ENCODE measurements at regions of chrX and their contacts with region 1.

Region 1: GRCh38 chrX:131841496-131842410 is 181.3 kb upstream of the STK26 start:
- DNase-seq: no peak
- H3K4me3 Mint-ChIP-seq: no peak overlapping the region
- H3K27ac Mint-ChIP-seq: no peak overlapping the region
- H3K4me1 Mint-ChIP-seq: no peaks in the 10 kb centered on the region
- H3K27me3 Mint-ChIP-seq: no peaks in the 10 kb centered on the region

Region 2: GRCh38 chrX:131617182-131617581 is 224.6 kb before region 1 on chrX:
- intact Hi-C with region 1: no loop called
- DNase-seq: no peak
- H3K4me3 Mint-ChIP-seq: no peak overlapping the region
- H3K27ac Mint-ChIP-seq: no peak overlapping the region
- H3K4me1 Mint-ChIP-seq: no peaks in the 10 kb centered on the region
- H3K27me3 Mint-ChIP-seq: peaks cover 6% of the 10 kb centered on the region

Region 3: DNA sequence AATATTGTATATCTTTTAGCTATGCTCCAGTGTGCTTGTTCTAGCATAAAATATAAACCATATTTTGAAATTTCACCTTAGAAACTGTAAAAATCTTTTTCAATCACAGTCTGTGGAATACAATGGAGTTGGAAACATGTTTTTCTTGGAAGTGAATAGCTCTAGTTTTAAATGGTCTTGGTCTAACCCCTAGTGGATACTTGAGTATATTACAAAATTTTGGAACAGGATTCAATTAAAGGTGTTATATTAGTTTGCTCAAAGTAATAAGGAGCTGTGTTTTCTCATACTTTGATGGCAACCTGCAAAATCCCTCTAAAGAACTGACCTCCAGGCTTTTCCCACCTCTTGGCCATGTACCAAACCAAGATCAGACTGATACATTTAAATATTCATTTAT is 229.5 kb after region 1 on chrX:
- intact Hi-C with region 1: loop called (anchors 1 kb)
- DNase-seq: no peak
- H3K4me3 Mint-ChIP-seq: no peak overlapping the region
- H3K27ac Mint-ChIP-seq: no peak overlapping the region
- H3K4me1 Mint-ChIP-seq: no peaks in the 10 kb centered on the region
- H3K27me3 Mint-ChIP-seq: no peaks in the 10 kb centered on the region

Region 4: DNA sequence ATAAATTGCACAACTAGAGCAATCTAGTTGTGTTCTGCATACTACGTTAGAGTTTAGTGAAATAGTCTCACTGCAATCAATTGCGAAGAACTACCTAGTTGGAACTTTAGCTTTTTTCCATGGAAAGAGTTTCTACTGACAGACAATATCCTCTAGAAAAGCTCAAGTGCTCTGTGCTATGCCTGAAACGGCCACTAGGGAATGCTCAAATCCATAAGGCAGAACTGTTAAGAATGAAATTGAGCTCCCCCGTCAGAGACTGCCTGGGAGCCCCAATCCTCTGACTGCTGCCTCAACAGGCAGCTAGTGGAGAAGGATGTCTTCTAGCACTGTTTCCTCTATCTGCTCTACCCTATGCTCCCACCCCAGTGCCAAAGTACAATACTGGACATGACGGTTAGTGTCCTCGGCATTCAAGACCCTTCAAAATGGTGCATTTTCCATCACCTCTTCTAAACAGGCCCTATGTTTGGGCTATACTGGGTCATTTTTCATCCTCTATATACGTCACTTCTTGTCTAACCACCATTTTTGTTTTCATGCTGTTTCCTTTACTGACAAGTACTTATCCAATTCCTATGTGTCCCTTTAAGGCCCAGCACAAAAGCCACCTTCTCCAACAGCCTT is 250.8 kb after region 1 on chrX:
- intact Hi-C with region 1: loop called (anchors 5 kb)
- DNase-seq: peak; percentile 0
- H3K4me3 Mint-ChIP-seq: no peak overlapping the region
- H3K27ac Mint-ChIP-seq: no peak overlapping the region
- H3K4me1 Mint-ChIP-seq: peaks cover 11% of the 10 kb centered on the region
- H3K27me3 Mint-ChIP-seq: no peaks in the 10 kb centered on the region

Region 5: DNA sequence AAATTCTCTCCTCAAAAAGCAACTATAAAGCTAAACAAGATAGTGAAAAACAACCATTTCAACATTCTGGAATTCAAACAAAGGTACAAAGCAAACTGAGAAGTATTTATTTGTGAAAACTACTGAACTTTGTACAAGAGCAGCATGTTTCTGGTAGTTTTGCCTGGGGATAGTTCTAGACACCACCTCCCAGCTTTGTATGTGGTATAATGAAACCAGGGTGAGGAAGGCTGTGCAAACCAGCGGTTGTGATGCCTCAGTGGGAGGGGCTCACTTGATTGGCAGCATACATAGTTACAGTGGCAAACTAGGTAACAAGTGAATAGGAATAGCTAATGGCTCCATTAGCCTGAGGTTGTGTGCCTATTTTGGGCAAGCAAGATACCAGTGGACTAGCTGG is 304.7 kb after region 1 on chrX:
- intact Hi-C with region 1: no loop called
- DNase-seq: no peak
- H3K4me3 Mint-ChIP-seq: no peak overlapping the region
- H3K27ac Mint-ChIP-seq: no peak overlapping the region
- H3K4me1 Mint-ChIP-seq: no peaks in the 10 kb centered on the region
- H3K27me3 Mint-ChIP-seq: no peaks in the 10 kb centered on the region